Sigmoid colon (tissue), 7 donors: ENCODE measurements at regions of chr20 and their contacts with region 1.

Region 1: DNA sequence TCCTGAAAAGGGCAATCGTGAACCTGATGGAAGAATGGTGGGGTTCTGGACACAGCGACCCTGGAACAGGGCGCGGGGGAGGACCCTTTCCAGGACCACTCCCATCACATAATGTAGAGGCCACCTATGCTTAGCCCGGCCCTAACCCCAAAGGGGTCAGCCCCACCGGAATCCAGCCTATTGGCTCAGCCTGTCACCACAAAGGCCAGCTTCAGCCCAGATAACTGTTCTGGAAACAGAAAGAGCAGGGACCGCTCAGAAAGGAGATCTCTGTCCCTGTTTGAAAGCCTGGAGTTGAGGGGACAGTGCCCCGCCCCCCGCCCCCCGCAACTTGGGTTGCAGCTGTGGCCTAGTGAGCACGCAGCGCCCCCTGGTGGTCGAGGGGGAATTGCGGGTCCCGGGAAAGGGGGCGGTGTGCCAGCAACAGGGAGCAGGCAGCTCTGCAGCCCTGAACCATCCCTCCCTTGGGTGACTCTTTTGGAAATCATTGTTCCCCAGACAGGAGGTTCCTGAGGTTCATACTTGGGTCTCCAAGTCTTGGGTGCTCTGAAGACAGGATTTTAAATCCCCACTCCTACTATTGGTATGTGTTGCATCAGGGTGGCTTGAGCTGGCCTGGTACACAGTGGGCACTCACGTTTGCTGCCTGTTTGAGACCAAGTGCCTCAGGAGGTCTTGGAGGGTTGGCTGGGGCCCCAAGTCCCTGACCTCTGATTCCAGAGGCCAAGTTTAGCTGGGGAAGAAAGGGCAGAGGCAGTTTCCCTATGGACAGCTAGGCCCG is 1.5 kb downstream of the SIGLEC1 start:
- DNase-seq: peak; percentile 87
- H3K4me3 ChIP-seq: peak overlapping the region in 2 of 4 donors; percentile 14 to 32
- H3K27ac ChIP-seq: peak overlapping the region in 2 of 4 donors; percentile 11 to 28
- H3K4me1 ChIP-seq: peaks cover 0 to 12% (median 10%) of the 10 kb centered on the region in 4 donors
- H3K27me3 ChIP-seq: no peaks in the 10 kb centered on the region
- CTCF ChIP-seq: peak; percentile 95 to 98 (median 97)
- EP300 ChIP-seq: no peak
- POLR2A ChIP-seq: no peak

Region 2: GRCh38 chr20:3420211-3420707 is 290.6 kb before region 1 on chr20:
- intact Hi-C with region 1: no loop called
- DNase-seq: peak; percentile 77
- H3K4me3 ChIP-seq: no peak overlapping the region
- H3K27ac ChIP-seq: peak overlapping the region in 1 of 4 donors; percentile 34
- H3K4me1 ChIP-seq: no peaks in the 10 kb centered on the region
- H3K27me3 ChIP-seq: no peaks in the 10 kb centered on the region
- CTCF ChIP-seq: no peak
- EP300 ChIP-seq: no peak
- POLR2A ChIP-seq: no peak

Region 3: DNA sequence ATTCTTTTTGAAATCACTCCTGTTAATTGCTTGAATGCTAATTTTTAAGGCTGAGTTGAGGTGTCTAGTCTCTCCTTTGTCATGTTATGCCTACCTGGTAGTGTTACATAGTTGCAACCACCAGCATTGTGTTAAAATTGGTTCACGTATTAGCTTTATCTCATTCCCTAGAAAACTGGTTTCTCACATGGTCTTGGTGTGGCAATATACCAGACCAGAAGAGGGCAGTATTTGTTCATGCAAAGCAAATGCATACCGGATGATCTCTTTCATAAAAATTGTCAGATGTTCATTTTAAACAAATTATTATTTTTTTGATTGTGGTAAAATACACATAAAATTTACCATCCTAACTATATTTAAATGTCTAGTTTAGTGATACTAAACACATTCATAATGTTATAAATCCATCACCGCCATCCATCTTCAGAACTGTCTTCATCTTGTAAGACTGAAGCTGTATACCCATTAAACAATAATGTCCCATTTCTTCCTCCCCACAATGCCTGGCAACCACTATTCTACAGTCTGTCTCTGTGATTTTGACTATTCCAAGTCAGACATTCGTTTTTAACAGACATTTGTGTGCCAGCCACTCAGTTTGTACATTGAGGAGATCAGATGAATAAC is 147.2 kb before region 1 on chr20:
- intact Hi-C with region 1: loop called (anchors 10 kb)
- DNase-seq: no peak
- H3K4me3 ChIP-seq: no peak overlapping the region
- H3K27ac ChIP-seq: no peak overlapping the region
- H3K4me1 ChIP-seq: peaks cover 0 to 4% (median 0%) of the 10 kb centered on the region in 4 donors
- H3K27me3 ChIP-seq: no peaks in the 10 kb centered on the region
- CTCF ChIP-seq: peak; percentile 21 to 60 (median 30)
- EP300 ChIP-seq: no peak
- POLR2A ChIP-seq: no peak

Region 4: DNA sequence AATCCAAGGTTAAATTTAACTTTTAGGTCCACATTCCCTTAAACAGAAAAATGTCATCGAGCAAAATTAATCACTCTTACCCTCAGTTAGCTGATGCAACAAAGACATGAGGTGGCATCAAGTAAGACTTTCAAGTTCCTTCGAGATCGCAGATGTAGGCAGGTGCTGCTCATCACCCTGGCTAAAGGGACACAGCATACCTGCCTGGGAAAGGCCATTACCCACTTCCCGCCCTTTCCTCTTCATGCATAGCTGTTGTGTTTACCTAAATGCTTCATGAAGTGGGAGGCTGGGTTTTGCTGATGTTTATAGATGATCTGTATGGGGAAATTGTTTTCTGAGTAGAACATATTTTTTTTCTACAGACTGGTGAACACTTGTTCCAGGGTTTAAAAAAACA is 115.4 kb before region 1 on chr20:
- intact Hi-C with region 1: no loop called
- DNase-seq: no peak
- H3K4me3 ChIP-seq: no peak overlapping the region
- H3K27ac ChIP-seq: no peak overlapping the region
- H3K4me1 ChIP-seq: no peaks in the 10 kb centered on the region
- H3K27me3 ChIP-seq: no peaks in the 10 kb centered on the region
- CTCF ChIP-seq: no peak
- EP300 ChIP-seq: no peak
- POLR2A ChIP-seq: no peak

Region 5: DNA sequence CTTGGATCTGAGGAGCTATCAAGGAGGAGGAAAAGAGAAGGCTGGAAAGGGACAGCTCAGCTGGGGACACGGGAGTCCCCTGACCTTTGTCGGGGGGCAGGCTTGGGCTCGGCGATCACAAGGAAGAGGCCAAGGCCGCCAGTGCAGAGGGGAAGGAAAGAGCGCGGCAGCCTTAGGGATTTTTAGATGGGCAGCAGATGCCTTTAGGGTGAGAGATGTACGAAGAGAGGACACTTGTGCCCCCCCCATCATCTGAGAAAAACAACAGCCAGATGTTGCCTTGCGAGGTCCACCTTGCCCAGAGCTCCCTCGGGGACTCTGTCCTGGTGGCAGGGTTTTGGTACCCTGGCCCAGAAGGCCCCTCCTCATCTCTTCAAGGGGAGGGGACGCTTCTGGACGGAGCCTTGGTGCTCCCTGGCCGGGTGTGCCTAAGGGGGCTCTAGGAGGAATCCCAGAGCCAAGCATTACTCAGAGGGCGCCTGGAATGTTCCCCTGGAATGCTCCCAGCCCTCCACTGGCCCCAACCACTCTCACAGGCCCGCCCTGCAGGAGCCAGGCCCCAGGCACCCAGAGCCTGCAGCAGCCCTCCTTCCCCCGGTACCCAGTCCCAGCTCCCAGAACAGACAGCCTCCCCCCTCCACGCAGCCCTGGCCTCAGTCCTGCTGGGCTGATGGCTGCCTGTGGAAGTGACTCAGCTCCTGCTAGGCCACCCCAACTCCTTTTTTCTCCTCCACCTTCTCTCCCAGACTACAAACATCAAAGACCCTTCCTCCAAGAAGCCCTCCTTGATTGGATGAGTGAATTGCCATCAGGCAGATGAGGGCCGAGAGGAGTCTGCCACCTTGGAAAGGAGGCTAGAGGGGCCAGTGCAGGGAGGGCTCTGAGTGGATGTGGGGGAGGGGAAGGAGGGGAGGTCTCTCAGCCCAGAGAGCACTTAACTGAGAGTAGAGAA is 30.9 kb before region 1 on chr20:
- intact Hi-C with region 1: loop called (anchors 1 kb)
- DNase-seq: peak; percentile 94
- H3K4me3 ChIP-seq: peak overlapping the region; percentile 57 to 76 (median 70)
- H3K27ac ChIP-seq: peak overlapping the region; percentile 86 to 97 (median 94)
- H3K4me1 ChIP-seq: peaks cover 0 to 62% (median 57%) of the 10 kb centered on the region in 4 donors
- H3K27me3 ChIP-seq: no peaks in the 10 kb centered on the region
- CTCF ChIP-seq: no peak
- EP300 ChIP-seq: no peak
- POLR2A ChIP-seq: peak; percentile 23 to 52

Region 6: DNA sequence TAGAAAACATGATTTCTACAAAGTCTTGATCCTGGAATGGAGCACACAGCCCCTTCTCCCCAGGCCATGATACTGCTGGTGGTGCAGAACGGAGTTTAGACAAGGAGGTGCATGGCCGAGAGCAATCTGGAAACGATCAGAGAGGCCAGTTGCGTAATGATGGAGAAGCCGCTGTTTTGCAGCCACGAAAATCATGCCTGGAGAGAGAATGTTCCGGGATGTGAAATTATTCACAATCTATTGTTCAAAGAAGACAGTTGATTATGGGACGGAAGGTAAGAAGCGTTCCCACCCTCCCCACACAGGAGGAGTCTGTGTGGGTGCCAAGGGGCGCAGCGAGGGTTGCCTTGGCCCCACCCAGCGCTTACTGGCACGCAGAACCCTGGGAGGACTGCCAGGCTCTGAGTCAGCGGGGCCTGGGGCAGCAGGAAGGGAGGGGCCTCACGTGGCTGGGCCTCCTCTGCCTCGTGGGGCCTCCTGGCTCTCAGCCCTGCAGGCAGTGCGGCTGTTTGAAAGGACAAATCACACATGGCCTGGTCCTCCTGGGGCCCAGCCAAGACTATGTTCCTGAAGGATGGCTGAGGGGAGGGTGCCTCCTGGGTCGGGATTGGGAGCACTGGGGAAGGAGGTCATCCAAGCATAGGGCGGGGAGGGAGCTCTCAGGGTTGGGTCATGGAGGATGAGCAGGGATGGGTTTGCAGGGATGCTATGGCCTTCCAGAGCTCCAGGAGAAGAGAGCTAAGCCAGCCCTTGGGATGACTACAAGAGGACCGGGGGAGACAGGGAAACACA is 100.8 kb after region 1 on chr20:
- intact Hi-C with region 1: no loop called
- DNase-seq: peak; percentile 100
- H3K4me3 ChIP-seq: peak overlapping the region; percentile 31 to 47 (median 40)
- H3K27ac ChIP-seq: peak overlapping the region; percentile 86 to 93 (median 91)
- H3K4me1 ChIP-seq: peaks cover 0 to 62% (median 56%) of the 10 kb centered on the region in 4 donors
- H3K27me3 ChIP-seq: no peaks in the 10 kb centered on the region
- CTCF ChIP-seq: no peak
- EP300 ChIP-seq: peak; percentile 86 to 96 (median 92)
- POLR2A ChIP-seq: peak; percentile 84